ENCODE measurements at regions of chr2 and their contacts with region 1.

Region 1: GRCh38 chr2:227766373-227766883 is 20.7 kb downstream of the SCYGR8 start:
- DNase-seq: peak; percentile 85
- H3K4me3 ChIP-seq: no peak overlapping the region
- H3K27ac ChIP-seq: peak overlapping the region in 2 of 4 donors; percentile 22 to 33
- H3K4me1 ChIP-seq: peaks cover 5 to 16% (median 14%) of the 10 kb centered on the region in 4 donors
- H3K27me3 ChIP-seq: no peaks in the 10 kb centered on the region
- CTCF ChIP-seq: peak; percentile 83 to 93 (median 86)
- EP300 ChIP-seq: no peak
- POLR2A ChIP-seq: no peak

Region 2: GRCh38 chr2:227052879-227053278 is 713.5 kb before region 1 on chr2:
- in situ Hi-C with region 1: no loop called
- intact Hi-C with region 1: no loop called
- DNase-seq: no peak
- H3K4me3 ChIP-seq: no peak overlapping the region
- H3K27ac ChIP-seq: no peak overlapping the region
- H3K4me1 ChIP-seq: peaks cover 0 to 5% (median 0%) of the 10 kb centered on the region in 4 donors
- H3K27me3 ChIP-seq: no peaks in the 10 kb centered on the region
- CTCF ChIP-seq: no peak
- EP300 ChIP-seq: no peak
- POLR2A ChIP-seq: no peak

Region 3: DNA sequence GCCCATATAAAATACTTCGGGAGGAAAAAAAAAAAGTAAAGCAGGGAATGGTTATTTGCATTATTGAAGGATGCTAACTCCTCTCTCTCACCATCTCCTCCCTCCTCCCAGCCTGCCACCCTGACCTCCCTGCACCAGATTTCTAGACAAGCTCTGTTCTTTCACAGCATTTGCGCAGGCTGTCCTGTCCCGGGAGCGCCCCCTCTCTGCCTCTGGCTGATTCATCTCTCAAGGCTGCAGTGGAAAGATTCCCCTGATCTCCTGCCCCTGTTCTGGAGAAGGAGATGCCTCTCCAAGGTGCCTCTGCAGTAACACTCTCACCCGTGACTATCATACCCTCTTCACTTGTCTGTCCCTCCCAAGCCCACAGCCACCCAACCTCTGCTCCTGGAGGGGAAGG is 640.9 kb before region 1 on chr2:
- in situ Hi-C with region 1: loop called in 1 of 4 experiments (anchors 25 kb)
- intact Hi-C with region 1: no loop called
- DNase-seq: no peak
- H3K4me3 ChIP-seq: no peak overlapping the region
- H3K27ac ChIP-seq: no peak overlapping the region
- H3K4me1 ChIP-seq: no peaks in the 10 kb centered on the region
- H3K27me3 ChIP-seq: no peaks in the 10 kb centered on the region
- CTCF ChIP-seq: no peak
- EP300 ChIP-seq: no peak
- POLR2A ChIP-seq: no peak

Region 4: GRCh38 chr2:227406177-227407031 is 360.0 kb before region 1 on chr2:
- in situ Hi-C with region 1: loop called in 3 of 4 experiments (anchors 5 to 25 kb)
- intact Hi-C with region 1: loop called (anchors 10 kb)
- DNase-seq: peak; percentile 73
- H3K4me3 ChIP-seq: no peak overlapping the region
- H3K27ac ChIP-seq: peak overlapping the region; percentile 43 to 63 (median 54)
- H3K4me1 ChIP-seq: peaks cover 0 to 25% (median 13%) of the 10 kb centered on the region in 4 donors
- H3K27me3 ChIP-seq: no peaks in the 10 kb centered on the region
- CTCF ChIP-seq: peak; percentile 43 to 73 (median 63)
- EP300 ChIP-seq: no peak
- POLR2A ChIP-seq: no peak

Region 5: DNA sequence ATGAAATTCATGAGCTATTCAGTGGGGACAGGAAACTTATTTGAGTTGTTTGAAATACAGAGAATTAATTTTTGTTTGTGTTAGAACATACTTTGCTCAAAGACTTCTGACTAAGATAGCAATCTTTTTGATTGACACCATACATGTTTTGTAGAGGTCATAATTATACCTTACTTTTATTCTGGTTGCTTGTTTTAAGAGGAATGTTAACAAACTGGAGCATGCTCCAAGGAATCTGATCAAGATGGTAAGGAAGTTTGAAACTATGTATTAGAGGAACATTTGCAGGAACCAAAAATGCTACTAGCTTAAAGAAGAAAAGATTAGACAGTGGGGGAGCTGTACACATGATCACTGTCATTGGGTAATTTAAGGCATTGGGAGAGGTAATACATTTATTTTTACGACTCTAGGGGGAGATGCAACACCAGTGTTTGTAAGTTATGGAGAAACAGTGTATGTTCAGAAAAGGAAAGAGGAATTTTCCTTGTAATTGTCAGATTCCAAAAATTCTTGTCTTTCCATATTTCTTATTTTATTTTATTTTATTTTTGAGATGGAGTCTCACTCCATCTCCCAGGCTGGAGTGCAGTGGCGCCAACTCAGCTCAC is 286.5 kb before region 1 on chr2:
- in situ Hi-C with region 1: loop called in 1 of 4 experiments (anchors 25 kb)
- intact Hi-C with region 1: loop called (anchors 10 kb)
- DNase-seq: no peak
- H3K4me3 ChIP-seq: no peak overlapping the region
- H3K27ac ChIP-seq: no peak overlapping the region
- H3K4me1 ChIP-seq: peaks cover 0 to 64% (median 32%) of the 10 kb centered on the region in 4 donors
- H3K27me3 ChIP-seq: no peaks in the 10 kb centered on the region
- CTCF ChIP-seq: peak in 1 of 5 experiments; percentile 9
- EP300 ChIP-seq: no peak
- POLR2A ChIP-seq: no peak

Region 6: GRCh38 chr2:227655454-227655853 is 111.0 kb before region 1 on chr2:
- in situ Hi-C with region 1: loop called in 3 of 4 experiments (anchors 5 to 25 kb)
- intact Hi-C with region 1: loop called (anchors 5 kb)
- DNase-seq: no peak
- H3K4me3 ChIP-seq: no peak overlapping the region
- H3K27ac ChIP-seq: no peak overlapping the region
- H3K4me1 ChIP-seq: peaks cover 0 to 10% (median 3%) of the 10 kb centered on the region in 4 donors
- H3K27me3 ChIP-seq: no peaks in the 10 kb centered on the region
- CTCF ChIP-seq: no peak
- EP300 ChIP-seq: no peak
- POLR2A ChIP-seq: no peak

Region 7: DNA sequence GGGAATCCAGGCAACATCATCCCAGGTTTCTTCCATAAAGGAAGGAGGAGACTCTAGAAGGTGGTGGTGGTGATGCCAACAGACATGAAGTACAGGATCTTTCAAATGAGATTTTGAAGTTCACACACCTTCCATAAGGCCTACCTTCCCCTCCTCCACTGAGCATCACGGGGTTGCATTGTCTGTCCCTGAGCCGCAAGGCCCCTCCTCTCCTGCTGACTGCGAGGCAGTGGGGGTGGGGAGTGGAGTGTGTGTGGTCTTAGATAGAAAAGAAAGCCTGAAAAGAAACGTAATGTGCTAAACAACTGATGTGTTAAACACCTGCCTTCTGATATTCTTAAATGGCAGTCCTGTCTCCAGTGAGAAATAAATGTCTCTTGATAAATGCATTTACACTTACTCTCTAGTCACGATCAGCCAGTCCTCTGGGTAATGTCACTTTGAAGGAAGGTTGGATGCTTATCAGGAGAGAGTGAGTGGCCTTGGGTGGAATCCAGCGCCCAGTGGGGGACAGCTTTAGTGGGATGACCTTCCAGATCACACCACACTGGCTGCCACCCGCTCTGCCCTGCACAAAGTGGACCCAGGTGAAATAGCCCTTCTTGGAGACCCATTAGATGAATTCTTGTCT is 105.3 kb before region 1 on chr2:
- in situ Hi-C with region 1: loop called in 3 of 4 experiments (anchors 5 to 25 kb)
- intact Hi-C with region 1: loop called (anchors 5 kb)
- DNase-seq: no peak
- H3K4me3 ChIP-seq: no peak overlapping the region
- H3K27ac ChIP-seq: no peak overlapping the region
- H3K4me1 ChIP-seq: peaks cover 0 to 14% (median 3%) of the 10 kb centered on the region in 4 donors
- H3K27me3 ChIP-seq: no peaks in the 10 kb centered on the region
- CTCF ChIP-seq: no peak
- EP300 ChIP-seq: no peak
- POLR2A ChIP-seq: no peak

Region 8: GRCh38 chr2:227862227-227862740 is 95.9 kb after region 1 on chr2:
- in situ Hi-C with region 1: loop called in 1 of 4 experiments (anchors 10 kb)
- intact Hi-C with region 1: no loop called
- DNase-seq: peak; percentile 36
- H3K4me3 ChIP-seq: no peak overlapping the region
- H3K27ac ChIP-seq: no peak overlapping the region
- H3K4me1 ChIP-seq: no peaks in the 10 kb centered on the region
- H3K27me3 ChIP-seq: no peaks in the 10 kb centered on the region
- CTCF ChIP-seq: peak; percentile 64 to 83 (median 67)
- EP300 ChIP-seq: no peak
- POLR2A ChIP-seq: no peak

Measured in transverse colon (tissue), 4 donors.